ENCODE measurements at regions of chr17 and their contacts with region 1.

Region 1: GRCh38 chr17:18920911-18921441 is 31.0 kb upstream of the SLC5A10 start:
- DNase-seq: peak in 5 of 14 experiments; percentile 16 to 44 (median 26)
- ATAC-seq: peak; percentile 54
- H3K4me3 ChIP-seq: no peak overlapping the region
- H3K4me3 Mint-ChIP-seq: peak overlapping the region; percentile 55
- H3K27ac ChIP-seq: no peak overlapping the region
- H3K27ac Mint-ChIP-seq: peak overlapping the region; percentile 81
- H3K4me1 ChIP-seq: peaks cover 53% of the 10 kb centered on the region
- H3K4me1 Mint-ChIP-seq: peaks cover 74% of the 10 kb centered on the region
- H3K27me3 ChIP-seq: no peaks in the 10 kb centered on the region
- H3K27me3 Mint-ChIP-seq: no peaks in the 10 kb centered on the region
- CTCF ChIP-seq: no peak

Region 2: GRCh38 chr17:18951941-18952842 is 31.2 kb after region 1 on chr17 and contains the start of gene SLC5A10:
- CTCF ChIA-PET with region 1: no interaction called
- POLR2A ChIA-PET with region 1: interaction called, 14 read pairs
- intact Hi-C with region 1: loop called in 1 of 2 experiments (anchors 1 kb)
- DNase-seq: no peak
- ATAC-seq: no peak
- H3K4me3 ChIP-seq: no peak within 1 kb of the TSS
- H3K4me3 Mint-ChIP-seq: no peak within 1 kb of the TSS
- H3K27ac ChIP-seq: no peak within 1 kb of the TSS
- H3K27ac Mint-ChIP-seq: no peak within 1 kb of the TSS
- H3K4me1 ChIP-seq: peaks cover 50% of the 10 kb centered on the region
- H3K4me1 Mint-ChIP-seq: peaks cover 34% of the 10 kb centered on the region
- H3K27me3 ChIP-seq: no peaks in the 10 kb centered on the region
- H3K27me3 Mint-ChIP-seq: no peaks in the 10 kb centered on the region
- CTCF ChIP-seq: no peak
- total RNA-seq, gene SLC5A10: not detected

Region 3: DNA sequence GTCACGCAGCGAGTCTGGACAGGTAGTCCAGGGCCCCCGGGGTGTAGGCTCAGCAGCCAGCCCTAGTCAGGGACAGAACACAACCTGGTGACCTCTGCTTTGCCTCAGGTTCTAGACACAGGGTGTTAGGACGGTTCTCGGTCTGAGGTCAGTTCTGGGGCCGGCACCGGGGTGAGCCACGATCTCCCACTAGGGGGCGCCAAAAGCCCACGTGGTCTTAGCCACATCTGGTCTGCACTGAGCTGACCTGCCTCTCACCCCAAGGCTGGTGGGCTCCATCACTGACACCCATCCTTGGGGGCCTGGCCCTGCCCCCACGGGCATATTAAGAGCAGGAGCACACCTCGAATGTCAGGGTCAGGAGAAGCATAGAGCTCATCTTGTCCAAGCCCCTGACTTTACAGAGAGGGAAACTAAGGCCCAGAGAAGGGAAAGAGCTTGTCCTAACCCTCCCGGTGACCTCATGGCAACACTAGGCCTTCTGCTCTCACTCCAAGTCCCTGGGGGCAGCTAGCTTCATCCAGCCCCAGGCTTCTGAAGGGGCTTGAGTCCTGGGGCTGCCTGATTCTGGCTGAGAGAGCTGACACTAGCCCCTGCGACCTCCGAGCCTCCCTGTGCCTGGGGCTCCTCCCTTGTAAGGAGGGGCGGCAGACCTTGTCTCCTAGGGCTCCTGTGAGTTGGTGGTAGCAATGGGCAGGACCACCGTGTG is 40.0 kb after region 1 on chr17:
- CTCF ChIA-PET with region 1: no interaction called
- POLR2A ChIA-PET with region 1: interaction called, 14 read pairs
- intact Hi-C with region 1: loop called in 1 of 2 experiments (anchors 1 kb)
- DNase-seq: peak; percentile 39 to 89 (median 70)
- ATAC-seq: peak; percentile 73
- H3K4me3 ChIP-seq: no peak overlapping the region
- H3K4me3 Mint-ChIP-seq: no peak overlapping the region
- H3K27ac ChIP-seq: no peak overlapping the region
- H3K27ac Mint-ChIP-seq: no peak overlapping the region
- H3K4me1 ChIP-seq: peaks cover 29% of the 10 kb centered on the region
- H3K4me1 Mint-ChIP-seq: peaks cover 23% of the 10 kb centered on the region
- H3K27me3 ChIP-seq: no peaks in the 10 kb centered on the region
- H3K27me3 Mint-ChIP-seq: no peaks in the 10 kb centered on the region
- CTCF ChIP-seq: peak; percentile 98

Region 4: GRCh38 chr17:19024101-19025078 is 103.4 kb after region 1 on chr17:
- CTCF ChIA-PET with region 1: no interaction called
- POLR2A ChIA-PET with region 1: no interaction called
- intact Hi-C with region 1: no loop called
- DNase-seq: peak in 4 of 14 experiments; percentile 28 to 40 (median 34)
- ATAC-seq: peak; percentile 66
- H3K4me3 ChIP-seq: no peak overlapping the region
- H3K4me3 Mint-ChIP-seq: peak overlapping the region; percentile 59
- H3K27ac ChIP-seq: peak overlapping the region; percentile 24 to 40
- H3K27ac Mint-ChIP-seq: peak overlapping the region; percentile 92
- H3K4me1 ChIP-seq: peaks cover 22% of the 10 kb centered on the region
- H3K4me1 Mint-ChIP-seq: peaks cover 22% of the 10 kb centered on the region
- H3K27me3 ChIP-seq: no peaks in the 10 kb centered on the region
- H3K27me3 Mint-ChIP-seq: no peaks in the 10 kb centered on the region
- CTCF ChIP-seq: no peak

Measured in CD4-positive, alpha-beta T cell (primary cell).